H1 (cell line): ENCODE measurements at regions of chr6 and their contacts with region 1.

Region 1: DNA sequence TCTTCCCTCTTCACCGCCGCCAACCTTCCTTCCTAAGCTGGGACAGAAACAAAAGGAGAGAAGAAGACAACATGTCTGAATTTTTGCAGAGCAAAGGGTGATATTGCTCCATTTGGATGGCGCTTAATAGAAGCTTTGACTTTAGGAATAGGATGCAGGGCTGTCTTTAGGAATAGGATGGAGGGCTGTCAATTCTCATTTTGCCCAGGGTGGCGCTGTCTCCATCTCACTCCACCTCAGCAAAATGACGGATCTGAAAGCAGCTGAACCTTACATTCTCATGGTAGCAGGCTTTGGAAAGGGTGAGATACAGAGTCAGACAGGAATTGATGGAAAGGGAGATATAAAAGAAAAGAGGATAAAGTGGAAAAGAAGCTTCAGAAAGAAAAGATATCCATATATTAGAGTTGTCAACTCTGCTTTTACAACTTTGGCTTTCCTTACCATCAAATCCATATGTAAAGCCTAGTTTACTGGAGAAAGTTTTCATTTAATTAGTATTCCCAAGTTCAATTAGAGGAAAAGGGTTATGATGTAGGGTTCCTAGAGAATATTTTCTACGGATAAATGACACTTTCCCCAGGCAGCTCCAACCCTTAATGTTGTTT is 2.4 kb downstream of the MTCL3 start:
- DNase-seq: peak in 1 of 2 experiments; percentile 74
- H3K4me3 ChIP-seq: peak overlapping the region; percentile 62 to 74 (median 74)
- H3K27ac ChIP-seq: no peak overlapping the region
- H3K4me1 ChIP-seq: peaks cover 0 to 7% (median 3%) of the 10 kb centered on the region in 4 experiments; a peak in 4 of 7 replicates
- H3K27me3 ChIP-seq: peaks cover 0 to 13% (median 11%) of the 10 kb centered on the region in 4 experiments; a peak in 5 of 7 replicates
- CTCF ChIP-seq: peak; percentile 71 to 81 (median 80)
- EP300 ChIP-seq: no peak
- POLR2A ChIP-seq: no peak
- RAD21 ChIP-seq: peak; percentile 25 to 34

Region 2: GRCh38 chr6:127464881-127465459 is 51.8 kb before region 1 on chr6:
- CTCF ChIA-PET with region 1: interaction called, 221 read pairs
- POLR2A ChIA-PET with region 1: interaction called, 12 read pairs
- DNase-seq: peak in 1 of 2 experiments; percentile 74
- H3K4me3 ChIP-seq: no peak overlapping the region
- H3K27ac ChIP-seq: no peak overlapping the region
- H3K4me1 ChIP-seq: no peaks in the 10 kb centered on the region
- H3K27me3 ChIP-seq: no peaks in the 10 kb centered on the region
- CTCF ChIP-seq: peak; percentile 60 to 91 (median 84)
- EP300 ChIP-seq: no peak
- POLR2A ChIP-seq: no peak
- RAD21 ChIP-seq: peak; percentile 92 to 94

Region 3: GRCh38 chr6:127496471-127496870 is 20.3 kb before region 1 on chr6:
- CTCF ChIA-PET with region 1: interaction called, 50 read pairs
- POLR2A ChIA-PET with region 1: interaction called, 5 read pairs
- DNase-seq: no peak
- H3K4me3 ChIP-seq: no peak overlapping the region
- H3K27ac ChIP-seq: no peak overlapping the region
- H3K4me1 ChIP-seq: no peaks in the 10 kb centered on the region
- H3K27me3 ChIP-seq: no peaks in the 10 kb centered on the region
- CTCF ChIP-seq: no peak
- EP300 ChIP-seq: no peak
- POLR2A ChIP-seq: no peak
- RAD21 ChIP-seq: no peak

Region 4: GRCh38 chr6:127533011-127533410 is 16.2 kb after region 1 on chr6:
- CTCF ChIA-PET with region 1: interaction called, 44 read pairs
- POLR2A ChIA-PET with region 1: no interaction called
- DNase-seq: no peak
- H3K4me3 ChIP-seq: no peak overlapping the region
- H3K27ac ChIP-seq: no peak overlapping the region
- H3K4me1 ChIP-seq: no peaks in the 10 kb centered on the region
- H3K27me3 ChIP-seq: no peaks in the 10 kb centered on the region
- CTCF ChIP-seq: no peak
- EP300 ChIP-seq: no peak
- POLR2A ChIP-seq: no peak
- RAD21 ChIP-seq: no peak

Region 5: DNA sequence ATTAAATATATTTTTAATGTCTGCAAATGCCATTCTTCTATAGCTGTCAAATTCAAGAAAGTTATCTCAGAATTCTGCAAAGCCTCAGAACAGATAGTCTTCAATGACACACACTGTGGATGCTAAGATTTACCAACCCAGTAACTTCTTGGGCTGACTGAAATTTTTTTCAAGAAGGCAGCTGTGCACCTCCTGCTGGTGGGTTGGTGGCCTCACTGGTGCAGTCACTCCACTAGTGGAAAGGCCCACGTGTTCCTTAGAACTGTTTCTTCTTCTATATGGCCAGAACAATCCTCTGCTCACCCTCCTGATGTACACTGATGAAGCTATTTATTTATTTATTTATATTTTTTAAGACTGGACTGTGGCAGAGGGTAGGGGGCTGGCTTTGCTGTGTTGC is 30.4 kb after region 1 on chr6:
- CTCF ChIA-PET with region 1: interaction called, 81 read pairs
- POLR2A ChIA-PET with region 1: no interaction called
- DNase-seq: no peak
- H3K4me3 ChIP-seq: no peak overlapping the region
- H3K27ac ChIP-seq: no peak overlapping the region
- H3K4me1 ChIP-seq: no peaks in the 10 kb centered on the region
- H3K27me3 ChIP-seq: peaks cover 0 to 1% (median 0%) of the 10 kb centered on the region in 4 experiments; a peak in 1 of 7 replicates
- CTCF ChIP-seq: peak; percentile 59 to 66 (median 63)
- EP300 ChIP-seq: no peak
- POLR2A ChIP-seq: no peak
- RAD21 ChIP-seq: peak; percentile 52 to 68

Region 6: DNA sequence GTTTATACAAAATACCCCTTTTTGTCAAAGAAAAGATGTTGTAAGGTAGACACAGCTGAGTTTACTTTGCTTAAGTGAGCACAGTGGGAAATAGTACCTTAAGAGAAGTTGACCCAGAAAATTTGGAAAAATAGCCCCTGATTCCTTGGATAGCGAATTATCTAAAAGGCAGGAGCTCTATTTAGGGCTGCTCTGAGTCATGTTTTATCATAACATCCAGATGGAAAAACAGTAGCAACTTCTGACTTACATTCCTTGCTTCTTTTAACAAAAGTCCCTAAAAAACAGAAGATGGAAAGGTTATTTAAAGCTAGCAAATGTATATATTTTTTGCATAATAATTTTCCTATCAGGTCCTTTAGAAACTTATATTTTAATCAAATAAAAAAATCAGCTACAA is 325.0 kb after region 1 on chr6:
- CTCF ChIA-PET with region 1: no interaction called
- POLR2A ChIA-PET with region 1: no interaction called
- DNase-seq: no peak
- H3K4me3 ChIP-seq: no peak overlapping the region
- H3K27ac ChIP-seq: no peak overlapping the region
- H3K4me1 ChIP-seq: no peaks in the 10 kb centered on the region
- H3K27me3 ChIP-seq: no peaks in the 10 kb centered on the region
- CTCF ChIP-seq: no peak
- EP300 ChIP-seq: no peak
- POLR2A ChIP-seq: no peak
- RAD21 ChIP-seq: no peak